CD8-positive, alpha-beta memory T cell (primary cell): ENCODE measurements at regions of chr17 and their contacts with region 1.

Region 1: DNA sequence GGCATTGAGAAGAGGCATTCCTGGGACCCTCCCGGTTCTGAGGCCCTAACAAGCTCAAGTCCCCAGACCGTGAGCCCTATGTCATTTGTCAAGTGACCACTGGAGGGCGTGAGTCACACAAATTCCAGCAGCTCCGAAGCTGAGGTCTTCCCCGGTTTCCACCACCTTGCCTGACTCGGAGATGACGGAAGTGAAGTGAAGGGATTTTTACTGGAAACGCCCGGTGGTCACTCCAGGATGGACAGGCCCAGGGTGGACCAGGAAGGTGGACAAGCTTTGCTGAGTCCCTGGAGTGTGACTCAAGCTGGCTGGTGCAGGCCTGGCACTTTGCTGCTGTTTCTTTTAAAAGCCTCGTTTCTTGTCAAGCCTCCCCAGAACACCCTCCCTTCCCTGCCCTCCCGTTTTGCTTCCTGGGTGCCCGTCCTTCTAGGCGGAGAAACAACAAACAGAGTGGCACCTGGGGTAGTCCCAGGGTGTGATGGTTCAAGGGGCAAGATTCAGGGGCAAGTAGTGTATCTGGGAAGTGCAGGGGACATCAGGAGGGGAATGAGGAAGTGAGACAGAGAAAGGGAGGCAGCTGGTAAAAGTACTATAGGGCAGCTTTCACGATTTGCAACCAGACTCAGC is 5.3 kb upstream of the NOS2 start:
- DNase-seq: peak; percentile 66 to 88 (median 73)
- H3K4me3 ChIP-seq: peak overlapping the region; percentile 63
- H3K4me3 Mint-ChIP-seq: peak overlapping the region; percentile 34 to 90 (median 85)
- H3K27ac ChIP-seq: peak overlapping the region; percentile 14
- H3K27ac Mint-ChIP-seq: peak overlapping the region; percentile 64 to 95 (median 89)
- H3K4me1 ChIP-seq: peaks cover 27% of the 10 kb centered on the region
- H3K4me1 Mint-ChIP-seq: peaks cover 32 to 42% (median 41%) of the 10 kb centered on the region in 3 donors
- H3K27me3 ChIP-seq: no peaks in the 10 kb centered on the region
- H3K27me3 Mint-ChIP-seq: peaks cover 0 to 4% of the 10 kb centered on the region in 2 donors

Region 2: DNA sequence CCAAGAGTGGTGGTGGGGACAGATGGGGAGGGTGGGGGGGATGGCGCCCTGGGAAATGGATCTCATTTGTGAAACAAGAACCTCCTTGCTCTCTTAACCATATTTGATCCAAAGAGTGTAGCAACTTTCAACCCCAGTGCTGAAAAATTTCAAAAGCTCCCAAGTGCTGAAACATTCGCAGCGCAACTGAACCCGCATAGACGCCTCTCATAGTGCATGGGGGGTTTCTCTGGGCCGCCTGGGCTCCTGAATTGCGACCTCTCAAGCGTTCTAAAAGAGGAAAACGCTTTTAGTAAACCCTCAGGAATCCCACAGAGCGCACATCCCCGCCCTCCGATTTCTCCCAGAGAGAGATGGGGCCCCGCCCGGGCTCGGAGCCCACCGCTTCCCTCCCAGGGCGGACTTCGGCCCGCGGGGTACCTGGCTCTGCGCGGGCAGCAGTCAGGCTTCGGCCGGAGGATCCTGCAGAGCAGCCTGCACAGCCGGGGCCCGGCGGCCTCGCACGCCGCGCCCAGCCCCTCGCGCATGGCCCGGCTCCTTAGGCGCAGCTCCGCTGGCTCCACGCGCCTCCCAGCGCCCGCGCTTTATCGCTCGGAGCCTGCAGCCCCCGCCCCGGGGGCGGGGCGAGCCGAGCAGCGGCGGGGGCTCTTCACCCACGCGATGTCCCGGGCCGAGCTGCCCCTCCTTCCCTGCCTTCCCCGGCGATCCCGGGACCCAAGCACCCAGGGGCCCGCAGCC is 12.3 kb before region 1 on chr17:
- CTCF ChIA-PET with region 1: interaction called, 20 read pairs
- POLR2A ChIA-PET with region 1: no interaction called
- DNase-seq: peak in 1 of 5 donors; percentile 35
- H3K4me3 ChIP-seq: no peak overlapping the region
- H3K4me3 Mint-ChIP-seq: peak overlapping the region in 6 of 7 donors; percentile 9 to 61 (median 34)
- H3K27ac ChIP-seq: no peak overlapping the region
- H3K27ac Mint-ChIP-seq: no peak overlapping the region
- H3K4me1 ChIP-seq: no peaks in the 10 kb centered on the region
- H3K4me1 Mint-ChIP-seq: peaks cover 5% of the 10 kb centered on the region in 3 donors
- H3K27me3 ChIP-seq: no peaks in the 10 kb centered on the region
- H3K27me3 Mint-ChIP-seq: peaks cover 39 to 60% of the 10 kb centered on the region in 2 donors

Region 3: GRCh38 chr17:27846042-27846655 is 40.5 kb after region 1 on chr17:
- CTCF ChIA-PET with region 1: interaction called, 13 read pairs
- POLR2A ChIA-PET with region 1: interaction called, 4 read pairs
- DNase-seq: peak in 4 of 5 donors; percentile 26 to 61 (median 52)
- H3K4me3 ChIP-seq: no peak overlapping the region
- H3K4me3 Mint-ChIP-seq: peak overlapping the region; percentile 61 to 85 (median 82)
- H3K27ac ChIP-seq: no peak overlapping the region
- H3K27ac Mint-ChIP-seq: peak overlapping the region; percentile 84 to 95 (median 90)
- H3K4me1 ChIP-seq: peaks cover 5% of the 10 kb centered on the region
- H3K4me1 Mint-ChIP-seq: peaks cover 26 to 30% (median 29%) of the 10 kb centered on the region in 3 donors
- H3K27me3 ChIP-seq: no peaks in the 10 kb centered on the region
- H3K27me3 Mint-ChIP-seq: peaks cover 0 to 3% of the 10 kb centered on the region in 2 donors

Region 4: GRCh38 chr17:27879987-27880608 is 74.5 kb after region 1 on chr17:
- CTCF ChIA-PET with region 1: interaction called, 195 read pairs
- POLR2A ChIA-PET with region 1: interaction called, 6 read pairs
- DNase-seq: peak; percentile 39 to 71 (median 44)
- H3K4me3 ChIP-seq: no peak overlapping the region
- H3K4me3 Mint-ChIP-seq: no peak overlapping the region
- H3K27ac ChIP-seq: no peak overlapping the region
- H3K27ac Mint-ChIP-seq: peak overlapping the region in 2 of 8 donors; percentile 12 to 38
- H3K4me1 ChIP-seq: peaks cover 17% of the 10 kb centered on the region
- H3K4me1 Mint-ChIP-seq: peaks cover 11 to 21% (median 16%) of the 10 kb centered on the region in 3 donors
- H3K27me3 ChIP-seq: no peaks in the 10 kb centered on the region
- H3K27me3 Mint-ChIP-seq: no peaks in the 10 kb centered on the region

Region 5: GRCh38 chr17:27892866-27893769 is 87.5 kb after region 1 on chr17 and contains the start of gene LYRM9:
- CTCF ChIA-PET with region 1: interaction called, 167 read pairs
- POLR2A ChIA-PET with region 1: interaction called, 30 read pairs
- DNase-seq: peak; percentile 92 to 94 (median 93)
- H3K4me3 ChIP-seq: peak within 1 kb of the TSS; percentile 73
- H3K4me3 Mint-ChIP-seq: peak within 1 kb of the TSS; percentile 79 to 93 (median 86)
- H3K27ac ChIP-seq: peak within 1 kb of the TSS; percentile 58
- H3K27ac Mint-ChIP-seq: peak within 1 kb of the TSS; percentile 26 to 86 (median 76)
- H3K4me1 ChIP-seq: no peaks in the 10 kb centered on the region
- H3K4me1 Mint-ChIP-seq: peaks cover 17 to 24% (median 23%) of the 10 kb centered on the region in 3 donors
- H3K27me3 ChIP-seq: peaks cover 4% of the 10 kb centered on the region
- H3K27me3 Mint-ChIP-seq: peaks cover 14 to 28% of the 10 kb centered on the region in 2 donors
- total RNA-seq, gene LYRM9: 2.5 to 3.4 TPM

Region 6: DNA sequence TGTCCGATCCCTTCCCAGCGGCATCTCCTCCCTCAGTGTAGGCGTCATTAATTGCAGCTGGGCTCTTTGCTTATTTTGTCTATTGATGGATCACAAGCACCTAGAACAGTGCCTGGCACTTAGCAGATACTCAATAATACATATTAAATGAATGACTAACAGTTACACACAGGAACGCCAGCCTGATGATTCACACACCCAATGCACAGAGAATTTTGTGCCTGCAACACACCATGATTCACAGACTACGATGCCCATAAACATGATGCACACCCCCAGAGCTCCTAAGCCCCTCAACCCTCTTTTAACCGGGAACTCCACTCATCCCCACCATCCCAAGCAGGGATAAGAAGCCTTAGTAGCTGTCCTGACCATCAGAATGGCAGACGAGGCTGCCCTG is 446.8 kb after region 1 on chr17:
- CTCF ChIA-PET with region 1: interaction called, 13 read pairs
- POLR2A ChIA-PET with region 1: no interaction called
- DNase-seq: no peak
- H3K4me3 ChIP-seq: no peak overlapping the region
- H3K4me3 Mint-ChIP-seq: peak overlapping the region in 1 of 7 donors; percentile 19
- H3K27ac ChIP-seq: no peak overlapping the region
- H3K27ac Mint-ChIP-seq: no peak overlapping the region
- H3K4me1 ChIP-seq: peaks cover 5% of the 10 kb centered on the region
- H3K4me1 Mint-ChIP-seq: peaks cover 4 to 11% (median 9%) of the 10 kb centered on the region in 3 donors
- H3K27me3 ChIP-seq: peaks cover 4% of the 10 kb centered on the region
- H3K27me3 Mint-ChIP-seq: peaks cover 14 to 40% of the 10 kb centered on the region in 2 donors